ENCODE measurements at regions of chr4 and their contacts with region 1.

Region 1: GRCh38 chr4:184649026-184649970 is at the starts of genes CASP3 and PRIMPOL:
- DNase-seq: peak; percentile 98
- ATAC-seq: peak; percentile 92
- H3K4me3 Mint-ChIP-seq: peak within 1 kb of the TSS; percentile 94
- H3K27ac Mint-ChIP-seq: peak within 1 kb of the TSS; percentile 89
- H3K4me1 Mint-ChIP-seq: peaks cover 43% of the 10 kb centered on the region
- H3K27me3 Mint-ChIP-seq: no peaks in the 10 kb centered on the region
- CTCF ChIP-seq: no peak
- total RNA-seq, gene CASP3: 24.0 and 24.9 TPM in 2 replicates
- total RNA-seq, gene PRIMPOL: 9.1 and 11.6 TPM in 2 replicates

Region 2: DNA sequence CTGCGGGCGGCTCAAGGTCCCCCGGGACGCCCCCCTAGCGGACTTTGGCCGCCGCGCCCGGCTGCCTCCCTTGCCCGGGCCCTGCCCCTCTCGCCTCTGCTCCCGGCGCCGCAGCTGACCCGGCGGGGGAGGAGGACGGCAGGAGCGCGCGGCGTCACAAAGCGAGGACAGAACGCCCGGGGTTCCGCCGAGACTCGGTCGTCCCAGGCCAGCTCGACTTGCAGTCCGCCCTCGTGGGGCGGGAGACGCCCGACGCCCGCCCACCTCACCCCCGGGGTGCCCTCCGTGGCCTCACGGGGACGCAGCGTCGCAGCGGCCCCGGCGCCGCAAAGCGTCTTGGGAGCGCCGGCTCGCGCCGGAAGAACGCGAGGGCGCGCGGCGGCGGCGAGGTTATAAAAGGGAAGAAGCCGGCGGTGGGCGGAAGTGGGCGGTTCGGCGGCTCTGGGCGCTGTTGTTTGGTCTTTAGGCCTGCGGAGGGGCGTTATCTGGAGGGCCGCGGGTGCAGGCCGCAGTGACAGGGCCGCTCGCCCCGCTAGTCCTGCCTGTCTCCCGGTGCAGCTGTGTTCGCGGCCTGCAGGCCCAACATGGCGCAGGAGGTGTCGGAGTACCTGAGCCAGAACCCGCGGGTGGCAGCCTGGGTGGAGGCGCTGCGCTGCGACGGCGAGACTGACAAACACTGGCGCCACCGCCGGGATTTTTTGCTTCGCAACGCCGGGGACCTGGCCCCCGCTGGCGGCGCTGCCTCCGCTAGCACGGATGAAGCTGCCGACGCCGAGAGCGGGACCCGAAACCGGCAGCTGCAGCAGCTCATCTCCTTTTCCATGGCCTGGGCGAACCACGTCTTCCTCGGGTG is 1204.9 kb before region 1 on chr4 and contains the start of gene CDKN2AIP:
- CTCF ChIA-PET with region 1: no interaction called
- POLR2A ChIA-PET with region 1: interaction called, 5 read pairs
- intact Hi-C with region 1: loop called (anchors 5 kb)
- DNase-seq: peak; percentile 93
- ATAC-seq: peak; percentile 86
- H3K4me3 Mint-ChIP-seq: peak within 1 kb of the TSS; percentile 95
- H3K27ac Mint-ChIP-seq: peak within 1 kb of the TSS; percentile 95
- H3K4me1 Mint-ChIP-seq: peaks cover 36% of the 10 kb centered on the region
- H3K27me3 Mint-ChIP-seq: no peaks in the 10 kb centered on the region
- CTCF ChIP-seq: no peak
- total RNA-seq, gene CDKN2AIP: 19.9 and 21.8 TPM in 2 replicates

Region 3: GRCh38 chr4:184310171-184310567 is 339.1 kb before region 1 on chr4:
- CTCF ChIA-PET with region 1: no interaction called
- POLR2A ChIA-PET with region 1: interaction called, 6 read pairs
- intact Hi-C with region 1: loop called (anchors 2 kb)
- DNase-seq: no peak
- ATAC-seq: peak; percentile 23
- H3K4me3 Mint-ChIP-seq: no peak overlapping the region
- H3K27ac Mint-ChIP-seq: peak overlapping the region; percentile 51
- H3K4me1 Mint-ChIP-seq: peaks cover 61% of the 10 kb centered on the region
- H3K27me3 Mint-ChIP-seq: no peaks in the 10 kb centered on the region
- CTCF ChIP-seq: no peak

Region 4: GRCh38 chr4:184538023-184538599 is 111.2 kb before region 1 on chr4:
- CTCF ChIA-PET with region 1: no interaction called
- POLR2A ChIA-PET with region 1: interaction called, 26 read pairs
- intact Hi-C with region 1: loop called (anchors 1 kb)
- DNase-seq: peak; percentile 54
- ATAC-seq: peak; percentile 68
- H3K4me3 Mint-ChIP-seq: peak overlapping the region; percentile 96
- H3K27ac Mint-ChIP-seq: peak overlapping the region; percentile 100
- H3K4me1 Mint-ChIP-seq: peaks cover 49% of the 10 kb centered on the region
- H3K27me3 Mint-ChIP-seq: no peaks in the 10 kb centered on the region
- CTCF ChIP-seq: no peak

Region 5: GRCh38 chr4:184911310-184911709 is 262.0 kb after region 1 on chr4:
- CTCF ChIA-PET with region 1: no interaction called
- POLR2A ChIA-PET with region 1: interaction called, 10 read pairs
- intact Hi-C with region 1: loop called (anchors 5 kb)
- DNase-seq: no peak
- ATAC-seq: no peak
- H3K4me3 Mint-ChIP-seq: no peak overlapping the region
- H3K27ac Mint-ChIP-seq: no peak overlapping the region
- H3K4me1 Mint-ChIP-seq: peaks cover 7% of the 10 kb centered on the region
- H3K27me3 Mint-ChIP-seq: peaks cover 3% of the 10 kb centered on the region
- CTCF ChIP-seq: no peak

Region 6: DNA sequence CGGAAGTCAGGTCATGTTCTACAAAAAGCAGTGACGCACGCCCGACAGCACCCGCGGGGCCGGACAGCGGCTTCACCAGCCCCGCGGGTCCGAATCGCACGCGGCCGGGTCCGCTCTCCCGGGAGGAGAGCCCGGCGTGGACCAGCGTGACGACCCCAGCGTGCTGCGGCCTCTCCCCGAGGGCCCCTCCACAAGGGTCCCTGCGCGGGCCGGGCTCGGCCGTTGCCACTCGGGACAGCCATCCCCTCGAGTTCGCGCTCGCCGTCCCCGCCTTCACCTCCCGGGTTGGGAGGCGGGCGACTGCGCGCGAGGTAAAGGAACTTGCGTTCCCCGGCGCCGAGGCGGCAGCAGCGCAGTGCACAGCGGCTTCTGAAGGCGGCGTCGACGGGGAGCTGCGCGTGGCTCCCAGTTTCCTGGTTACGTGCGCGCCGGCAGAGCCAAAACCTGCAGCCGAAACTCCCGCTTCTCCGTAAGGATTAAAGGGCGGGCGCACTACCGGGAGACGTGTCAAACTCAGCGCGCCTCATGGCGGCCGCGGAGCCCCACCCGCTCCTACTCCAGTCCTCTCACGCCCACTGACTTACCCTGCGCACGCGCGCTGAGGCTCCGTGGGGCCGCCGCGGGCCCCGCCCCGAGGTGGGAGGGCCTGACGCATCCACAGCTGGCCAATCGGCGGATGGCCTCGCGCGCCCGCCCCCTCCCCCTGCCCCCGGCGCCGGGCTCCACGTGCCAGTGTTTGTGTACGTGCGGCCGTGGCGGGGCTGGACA is 746.8 kb after region 1 on chr4:
- CTCF ChIA-PET with region 1: no interaction called
- POLR2A ChIA-PET with region 1: no interaction called
- intact Hi-C with region 1: loop called (anchors 2 kb)
- DNase-seq: peak; percentile 98
- ATAC-seq: peak; percentile 89
- H3K4me3 Mint-ChIP-seq: peak overlapping the region; percentile 94
- H3K27ac Mint-ChIP-seq: peak overlapping the region; percentile 94
- H3K4me1 Mint-ChIP-seq: peaks cover 63% of the 10 kb centered on the region
- H3K27me3 Mint-ChIP-seq: no peaks in the 10 kb centered on the region
- CTCF ChIP-seq: no peak

Measured in activated B cell treated with CpG ODN at 0.5 μM for 24 hours (primary cell).